Calu3 (cell line): ENCODE measurements at regions of chr12 and their contacts with region 1.

Region 1: DNA sequence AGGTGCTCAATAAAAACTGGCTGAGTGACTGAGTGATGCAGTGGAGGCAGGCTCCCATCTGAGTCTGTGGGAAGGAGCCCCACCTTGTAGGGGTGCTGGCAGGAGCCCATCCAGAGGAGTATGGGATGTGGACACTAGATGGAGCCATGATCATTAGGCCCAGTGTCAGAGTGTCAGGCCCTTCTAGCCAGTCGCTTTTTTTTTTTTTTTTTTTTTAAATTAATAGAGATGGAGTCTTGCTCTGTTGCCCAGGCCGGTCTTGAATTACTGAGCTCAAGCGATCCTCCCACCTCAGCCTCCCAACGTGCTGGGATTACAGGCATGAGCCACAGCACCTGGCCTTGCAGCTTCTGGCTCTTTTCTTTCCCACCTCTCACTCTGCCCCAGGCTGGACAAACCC is 11.5 kb downstream of the RITA1 start:
- DNase-seq: peak; percentile 81
- H3K4me3 Mint-ChIP-seq: no peak overlapping the region
- H3K27ac Mint-ChIP-seq: peak overlapping the region; percentile 42
- H3K4me1 Mint-ChIP-seq: peaks cover 13% of the 10 kb centered on the region
- H3K27me3 Mint-ChIP-seq: no peaks in the 10 kb centered on the region
- CTCF ChIP-seq: peak; percentile 57

Region 2: DNA sequence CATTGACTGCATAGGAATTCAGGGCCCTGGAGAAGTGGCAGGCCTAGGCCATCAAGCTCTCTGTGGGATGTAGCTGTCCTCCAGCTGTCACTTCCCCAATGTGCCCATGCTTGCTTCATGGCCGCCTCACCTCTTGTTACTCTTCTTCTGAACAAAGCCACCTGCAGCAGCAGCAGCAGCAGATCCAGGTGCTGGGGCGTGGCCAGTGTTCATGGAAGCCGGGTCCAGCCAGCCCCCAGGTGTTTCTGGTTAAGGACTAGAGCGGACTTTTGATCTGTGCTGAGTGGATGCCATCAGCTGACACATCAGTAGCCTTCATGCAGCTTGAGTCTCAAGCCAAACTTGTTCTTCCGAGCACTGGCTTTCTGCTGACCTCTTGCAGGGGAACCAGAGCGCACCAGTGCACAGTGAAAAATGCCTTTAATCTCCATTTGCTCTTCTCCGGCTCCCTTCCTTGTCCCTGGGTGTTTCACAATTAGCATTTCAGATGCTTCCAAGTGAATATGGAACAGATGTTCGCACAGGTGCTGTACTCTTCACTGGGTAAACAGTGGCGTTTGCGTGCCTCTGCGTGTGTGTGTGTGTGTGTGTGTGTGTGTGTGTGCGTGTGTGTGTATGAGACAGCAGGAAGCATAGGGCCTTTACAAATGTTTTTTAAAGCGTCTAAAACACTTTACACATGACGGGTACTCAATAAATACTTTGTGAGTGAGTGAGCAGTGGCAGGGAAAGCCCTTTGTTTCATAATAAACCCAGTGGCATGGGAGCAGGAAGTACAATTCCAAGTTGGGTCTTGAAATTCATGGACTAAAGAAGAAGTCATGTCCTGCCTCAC is 44.4 kb after region 1 on chr12:
- CTCF ChIA-PET with region 1: interaction called, 8 read pairs
- intact Hi-C with region 1: loop called (anchors 5 kb)
- DNase-seq: peak; percentile 75
- H3K4me3 Mint-ChIP-seq: peak overlapping the region; percentile 66
- H3K27ac Mint-ChIP-seq: peak overlapping the region; percentile 92
- H3K4me1 Mint-ChIP-seq: peaks cover 98% of the 10 kb centered on the region
- H3K27me3 Mint-ChIP-seq: no peaks in the 10 kb centered on the region
- CTCF ChIP-seq: no peak

Region 3: GRCh38 chr12:113310489-113310888 is 113.5 kb after region 1 on chr12:
- CTCF ChIA-PET with region 1: no interaction called
- intact Hi-C with region 1: loop called (anchors 5 kb)
- DNase-seq: peak; percentile 25
- H3K4me3 Mint-ChIP-seq: no peak overlapping the region
- H3K27ac Mint-ChIP-seq: no peak overlapping the region
- H3K4me1 Mint-ChIP-seq: no peaks in the 10 kb centered on the region
- H3K27me3 Mint-ChIP-seq: no peaks in the 10 kb centered on the region
- CTCF ChIP-seq: peak; percentile 20

Region 4: GRCh38 chr12:113358381-113359132 is 161.6 kb after region 1 on chr12 and contains the start of gene PLBD2:
- CTCF ChIA-PET with region 1: no interaction called
- intact Hi-C with region 1: loop called (anchors 5 kb)
- DNase-seq: peak; percentile 94
- H3K4me3 Mint-ChIP-seq: peak within 1 kb of the TSS; percentile 75
- H3K27ac Mint-ChIP-seq: peak within 1 kb of the TSS; percentile 39
- H3K4me1 Mint-ChIP-seq: peaks cover 13% of the 10 kb centered on the region
- H3K27me3 Mint-ChIP-seq: peaks cover under 1% of the 10 kb centered on the region
- CTCF ChIP-seq: no peak
- total RNA-seq, gene PLBD2: 31.5 and 36.4 TPM in 2 replicates

Region 5: DNA sequence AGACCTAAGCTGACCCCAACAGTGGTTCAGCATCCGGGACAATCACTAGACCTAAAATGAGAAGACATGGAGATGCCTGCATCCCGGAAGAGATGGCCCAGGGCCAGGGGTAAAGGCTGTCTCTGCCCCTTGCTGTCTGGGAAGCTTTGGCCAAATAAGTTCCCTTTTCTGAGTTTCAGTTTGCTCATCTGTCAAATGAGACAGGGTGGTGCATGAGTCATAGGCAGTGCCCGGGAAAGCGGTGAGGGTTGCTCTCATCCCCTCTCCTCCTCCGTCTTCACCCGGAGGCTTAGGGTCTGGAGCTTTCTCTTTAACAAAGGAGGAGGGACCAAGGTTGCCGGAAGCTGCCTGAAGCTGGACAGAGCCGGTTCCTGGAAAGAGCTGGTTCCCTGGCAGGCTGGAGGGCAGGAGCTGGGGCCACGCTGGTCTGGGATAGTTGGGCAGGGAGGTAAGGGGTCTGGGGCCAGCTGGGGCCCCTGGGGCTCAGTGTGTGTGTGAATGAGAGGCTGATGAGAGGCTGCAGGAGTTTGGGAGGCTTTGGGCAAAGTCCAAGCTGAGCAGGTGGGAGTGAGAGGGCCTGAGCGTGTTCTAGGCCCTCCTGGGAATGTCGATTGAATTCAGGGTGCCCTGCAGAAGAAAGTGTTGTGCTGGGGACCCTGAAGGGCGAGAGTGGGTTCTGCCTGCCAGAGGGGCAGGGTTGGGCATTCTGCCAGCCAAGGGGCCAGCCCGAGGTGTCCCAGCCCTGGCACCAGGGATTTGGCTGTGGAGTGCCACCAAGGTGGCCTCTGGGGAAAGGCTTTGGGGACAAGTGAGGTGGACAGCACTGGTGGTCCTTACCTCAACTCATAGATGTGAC is 225.3 kb after region 1 on chr12 and contains the start of gene SDSL:
- CTCF ChIA-PET with region 1: no interaction called
- intact Hi-C with region 1: loop called (anchors 5 kb)
- DNase-seq: peak; percentile 77
- H3K4me3 Mint-ChIP-seq: peak within 1 kb of the TSS; percentile 87
- H3K27ac Mint-ChIP-seq: peak within 1 kb of the TSS; percentile 77
- H3K4me1 Mint-ChIP-seq: peaks cover 32% of the 10 kb centered on the region
- H3K27me3 Mint-ChIP-seq: no peaks in the 10 kb centered on the region
- CTCF ChIP-seq: no peak
- total RNA-seq, gene SDSL: 19.9 and 25.5 TPM in 2 replicates

Region 6: GRCh38 chr12:113485330-113485729 is 288.3 kb after region 1 on chr12:
- CTCF ChIA-PET with region 1: no interaction called
- intact Hi-C with region 1: no loop called
- DNase-seq: no peak
- H3K4me3 Mint-ChIP-seq: no peak overlapping the region
- H3K27ac Mint-ChIP-seq: no peak overlapping the region
- H3K4me1 Mint-ChIP-seq: no peaks in the 10 kb centered on the region
- H3K27me3 Mint-ChIP-seq: peaks cover 100% of the 10 kb centered on the region
- CTCF ChIP-seq: no peak